ENCODE measurements at regions of chr10 and their contacts with region 1.

Region 1: DNA sequence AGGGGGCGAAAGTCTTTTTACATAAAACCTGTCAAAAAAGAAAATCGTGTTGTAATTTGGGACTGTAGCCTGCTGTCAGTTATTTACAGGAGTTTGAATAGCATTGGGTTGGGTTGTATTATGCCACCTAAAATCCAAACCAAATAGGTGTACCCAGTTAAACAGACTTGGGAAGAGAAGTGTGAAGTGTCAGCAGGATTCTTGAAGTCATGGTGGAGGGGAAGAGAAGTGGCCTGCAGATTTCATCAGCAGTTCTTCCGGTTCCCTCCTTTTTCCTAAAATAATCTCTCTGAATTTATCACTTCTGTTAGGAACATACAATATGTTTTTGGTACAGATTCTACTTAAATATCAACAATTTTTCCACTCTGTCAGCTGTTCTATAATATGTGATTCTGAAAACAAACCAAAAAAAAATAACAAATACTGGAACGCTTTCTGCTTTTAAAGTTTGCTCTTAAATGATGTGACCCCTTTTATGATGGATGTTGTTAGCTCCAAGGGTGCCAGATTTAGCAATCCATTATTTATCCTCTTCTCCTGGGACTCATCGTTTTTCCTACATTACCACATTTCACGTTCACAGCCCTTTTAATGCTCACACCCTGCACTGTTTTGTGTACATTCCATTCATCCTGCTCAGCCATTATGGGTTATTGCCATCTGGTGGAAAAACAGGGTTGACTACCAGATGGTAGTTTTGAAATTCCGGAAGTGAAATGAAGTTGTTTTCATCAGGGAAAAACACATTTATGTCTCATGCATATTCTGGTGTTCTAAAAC is 18.7 kb upstream of the ARHGAP12 start:
- DNase-seq: no peak
- H3K4me3 ChIP-seq: peak overlapping the region in 1 of 4 donors; percentile 23
- H3K27ac ChIP-seq: peak overlapping the region; percentile 64 to 74 (median 71)
- H3K4me1 ChIP-seq: peaks cover 0 to 32% (median 15%) of the 10 kb centered on the region in 4 donors
- H3K27me3 ChIP-seq: no peaks in the 10 kb centered on the region
- CTCF ChIP-seq: peak; percentile 43 to 71 (median 49)
- EP300 ChIP-seq: no peak
- POLR2A ChIP-seq: no peak

Region 2: GRCh38 chr10:31851216-31851615 is 96.1 kb before region 1 on chr10:
- in situ Hi-C with region 1: loop called in 1 of 4 experiments (anchors 10 kb)
- intact Hi-C with region 1: no loop called
- DNase-seq: no peak
- H3K4me3 ChIP-seq: no peak overlapping the region
- H3K27ac ChIP-seq: no peak overlapping the region
- H3K4me1 ChIP-seq: no peaks in the 10 kb centered on the region
- H3K27me3 ChIP-seq: no peaks in the 10 kb centered on the region
- CTCF ChIP-seq: no peak
- EP300 ChIP-seq: no peak
- POLR2A ChIP-seq: no peak